Activated naive CD4-positive, alpha-beta T cell treated with anti-CD3 and anti-CD28 coated beads for 36 hours (primary cell): ENCODE measurements at regions of chr6 and their contacts with region 1.

Region 1: GRCh38 chr6:159979136-159979874 is 10.4 kb downstream of the IGF2R start:
- DNase-seq: peak; percentile 87
- H3K4me3 Mint-ChIP-seq: peak overlapping the region; percentile 65
- H3K27ac Mint-ChIP-seq: peak overlapping the region; percentile 98
- H3K4me1 Mint-ChIP-seq: peaks cover 92% of the 10 kb centered on the region
- H3K27me3 Mint-ChIP-seq: no peaks in the 10 kb centered on the region

Region 2: DNA sequence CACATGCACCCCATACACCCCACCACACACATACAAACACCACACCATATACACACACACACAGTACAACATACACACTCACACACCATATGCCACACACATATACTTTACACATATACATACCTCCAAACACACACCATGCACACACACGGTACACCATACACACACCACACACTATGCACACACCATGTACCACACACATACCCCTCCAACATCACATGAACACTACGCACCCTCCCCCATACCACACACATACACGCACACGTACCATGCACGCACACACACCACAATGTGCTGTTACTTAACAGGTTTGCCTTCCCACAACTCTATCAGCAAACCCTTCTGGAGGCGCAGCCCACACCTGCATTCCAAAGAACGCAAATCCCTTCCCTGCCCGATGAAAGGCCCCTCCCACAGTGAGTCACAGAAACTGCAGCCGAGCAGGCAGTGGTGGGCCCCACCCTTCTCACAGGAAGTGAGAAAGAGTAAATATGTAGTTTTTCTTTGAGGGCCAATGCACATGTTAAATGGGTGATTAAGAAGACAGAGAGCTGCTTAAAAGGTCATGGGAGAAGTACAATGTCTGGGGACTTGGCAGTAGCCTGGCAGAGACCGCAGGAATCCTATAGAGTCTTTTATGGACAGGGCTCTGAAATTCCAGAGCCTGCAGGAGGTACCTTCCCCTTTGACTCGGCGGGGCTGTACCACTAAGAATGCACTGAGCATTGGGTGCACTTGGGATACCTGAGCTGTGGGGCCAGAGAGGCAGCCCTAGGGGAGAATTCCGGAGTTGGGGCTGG is 1126.0 kb before region 1 on chr6:
- CTCF ChIA-PET with region 1: no interaction called
- intact Hi-C with region 1: loop called (anchors 5 kb)
- DNase-seq: peak; percentile 95
- H3K4me3 Mint-ChIP-seq: no peak overlapping the region
- H3K27ac Mint-ChIP-seq: no peak overlapping the region
- H3K4me1 Mint-ChIP-seq: peaks cover 29% of the 10 kb centered on the region
- H3K27me3 Mint-ChIP-seq: no peaks in the 10 kb centered on the region

Region 3: DNA sequence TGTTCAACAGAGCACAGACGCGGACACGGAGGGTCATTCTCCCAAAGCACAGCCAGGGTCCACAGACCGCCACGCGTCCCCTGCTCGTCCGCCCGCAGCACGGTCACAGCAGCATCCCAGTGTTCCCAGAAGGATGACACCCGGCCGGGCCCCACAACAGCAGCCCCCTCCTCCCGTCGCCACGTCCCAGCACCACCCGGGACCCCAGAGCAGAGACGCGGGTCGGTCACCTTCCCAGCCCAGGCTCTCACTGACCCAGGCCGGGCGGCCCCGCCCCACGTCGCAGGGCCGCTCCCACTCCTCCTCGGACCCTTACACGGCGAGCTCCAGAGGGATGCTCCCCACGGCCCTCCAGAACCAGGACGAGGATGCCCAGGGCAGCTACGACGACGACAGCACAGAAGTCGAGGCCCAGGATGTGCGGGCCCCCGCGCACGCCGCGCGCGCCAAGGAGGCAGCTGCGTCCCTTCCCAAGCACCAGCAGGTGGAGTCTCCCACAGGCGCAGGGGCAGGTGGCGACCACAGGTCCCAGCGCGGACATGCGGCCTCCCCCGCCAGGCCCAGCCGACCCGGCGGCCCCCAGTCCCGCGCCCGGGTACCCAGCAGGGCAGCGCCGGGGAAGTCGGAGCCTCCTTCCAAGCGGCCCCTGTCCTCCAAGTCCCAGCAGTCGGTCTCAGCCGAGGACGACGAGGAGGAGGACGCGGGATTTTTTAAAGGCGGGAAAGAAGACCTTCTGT is 745.8 kb before region 1 on chr6:
- CTCF ChIA-PET with region 1: no interaction called
- intact Hi-C with region 1: no loop called
- DNase-seq: no peak
- H3K4me3 Mint-ChIP-seq: no peak overlapping the region
- H3K27ac Mint-ChIP-seq: no peak overlapping the region
- H3K4me1 Mint-ChIP-seq: peaks cover 2% of the 10 kb centered on the region
- H3K27me3 Mint-ChIP-seq: peaks cover 38% of the 10 kb centered on the region

Region 4: GRCh38 chr6:159968440-159969203 is 10.7 kb before region 1 on chr6 and contains the start of gene IGF2R:
- CTCF ChIA-PET with region 1: interaction called, 6 read pairs
- intact Hi-C with region 1: loop called (anchors 1 kb)
- DNase-seq: peak; percentile 94
- H3K4me3 Mint-ChIP-seq: peak within 1 kb of the TSS; percentile 87
- H3K27ac Mint-ChIP-seq: peak within 1 kb of the TSS; percentile 87
- H3K4me1 Mint-ChIP-seq: peaks cover 36% of the 10 kb centered on the region
- H3K27me3 Mint-ChIP-seq: no peaks in the 10 kb centered on the region
- total RNA-seq, gene IGF2R: 42.1 to 44.5 TPM

Region 5: GRCh38 chr6:159989492-159990480 is 10.5 kb after region 1 on chr6:
- CTCF ChIA-PET with region 1: interaction called, 7 read pairs
- intact Hi-C with region 1: loop called (anchors 1 kb)
- DNase-seq: no peak
- H3K4me3 Mint-ChIP-seq: no peak overlapping the region
- H3K27ac Mint-ChIP-seq: peak overlapping the region; percentile 61
- H3K4me1 Mint-ChIP-seq: peaks cover 52% of the 10 kb centered on the region
- H3K27me3 Mint-ChIP-seq: no peaks in the 10 kb centered on the region

Region 6: DNA sequence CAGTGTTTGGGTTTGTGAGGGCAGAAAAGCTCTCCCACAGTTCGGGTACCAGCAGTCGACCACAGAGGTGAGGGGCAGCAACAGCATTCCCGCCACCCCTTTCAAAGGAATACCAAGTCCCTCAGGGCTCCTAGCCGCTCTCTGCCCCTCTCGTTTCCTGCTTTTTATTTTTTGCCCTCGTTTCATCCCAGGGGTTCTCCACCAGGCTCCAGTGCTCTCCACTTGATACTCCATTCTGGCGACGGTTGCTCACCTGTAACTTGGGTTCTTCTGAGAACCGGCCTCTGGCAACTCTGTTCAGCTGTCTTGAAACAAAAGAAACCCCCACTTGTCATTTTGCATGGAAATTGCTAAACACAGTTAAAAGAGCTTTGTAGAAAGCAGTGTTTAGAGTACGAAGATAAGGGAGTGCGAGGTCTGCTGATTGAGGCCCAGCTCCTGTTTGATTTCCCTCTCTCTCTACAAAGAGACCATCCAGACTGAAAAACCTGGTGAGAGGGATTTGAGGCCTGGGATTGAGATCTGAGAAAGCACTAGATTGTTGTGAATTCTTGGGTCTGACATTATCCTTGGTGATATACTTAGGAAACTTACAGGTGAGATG is 18.3 kb after region 1 on chr6:
- CTCF ChIA-PET with region 1: interaction called, 3 read pairs
- intact Hi-C with region 1: loop called (anchors 1 kb)
- DNase-seq: no peak
- H3K4me3 Mint-ChIP-seq: no peak overlapping the region
- H3K27ac Mint-ChIP-seq: peak overlapping the region; percentile 46
- H3K4me1 Mint-ChIP-seq: peaks cover 67% of the 10 kb centered on the region
- H3K27me3 Mint-ChIP-seq: no peaks in the 10 kb centered on the region

Region 7: DNA sequence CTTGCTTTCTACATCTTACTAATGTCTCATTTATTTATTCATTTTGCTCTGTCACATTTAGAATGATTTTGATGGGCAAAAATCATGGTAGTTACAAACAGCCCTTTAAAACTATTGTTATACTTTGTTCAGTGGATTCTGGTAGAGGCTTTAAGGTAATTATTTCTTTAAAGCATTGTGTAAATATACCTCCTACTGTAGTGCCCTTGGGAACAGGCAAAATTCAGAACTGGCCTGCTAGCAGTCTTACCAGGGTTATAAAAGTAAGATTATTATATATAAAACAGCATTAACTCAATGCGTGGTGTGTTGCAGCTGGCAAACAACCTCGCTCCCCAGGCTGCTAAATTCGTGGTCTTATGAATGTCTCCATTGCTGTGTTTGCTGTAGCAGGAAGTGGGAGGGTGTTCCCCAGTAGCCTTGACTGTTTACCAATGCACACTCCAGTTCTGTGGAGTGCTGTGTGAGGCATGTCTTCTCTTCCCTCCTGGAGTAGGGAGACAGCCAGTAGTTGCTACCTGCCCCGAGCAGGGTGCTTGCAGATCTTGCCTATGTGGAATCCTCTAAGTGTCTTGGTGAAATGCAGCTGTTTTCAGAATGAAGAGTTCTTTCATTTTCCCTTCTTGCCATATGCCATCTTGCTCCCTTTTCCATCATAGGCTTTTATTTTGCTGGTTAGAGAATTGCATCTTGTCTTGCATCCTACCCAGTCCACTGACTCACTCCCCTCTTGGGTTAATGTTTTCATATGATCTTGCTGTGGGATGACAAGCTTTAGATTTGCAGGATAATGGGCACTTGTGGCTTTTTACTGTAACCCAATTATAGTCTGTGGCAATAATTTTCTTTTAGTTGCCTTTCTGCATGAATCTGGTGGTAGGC is 34.9 kb after region 1 on chr6:
- CTCF ChIA-PET with region 1: interaction called, 8 read pairs
- intact Hi-C with region 1: loop called (anchors 1 kb)
- DNase-seq: peak; percentile 48
- H3K4me3 Mint-ChIP-seq: peak overlapping the region; percentile 5
- H3K27ac Mint-ChIP-seq: peak overlapping the region; percentile 40
- H3K4me1 Mint-ChIP-seq: peaks cover 44% of the 10 kb centered on the region
- H3K27me3 Mint-ChIP-seq: no peaks in the 10 kb centered on the region